ENCODE measurements at regions of chr7 and their contacts with region 1.

Region 1: GRCh38 chr7:73851410-73852234 is 9.3 kb upstream of the METTL27 start:
- DNase-seq: no peak
- ATAC-seq: peak; percentile 23 to 74 (median 67)
- H3K4me3 ChIP-seq: no peak overlapping the region
- H3K27ac ChIP-seq: peak overlapping the region in 2 of 4 donors; percentile 78
- H3K4me1 ChIP-seq: peaks cover 0 to 4% (median 3%) of the 10 kb centered on the region in 3 donors
- H3K27me3 ChIP-seq: no peaks in the 10 kb centered on the region
- CTCF ChIP-seq: no peak

Region 2: DNA sequence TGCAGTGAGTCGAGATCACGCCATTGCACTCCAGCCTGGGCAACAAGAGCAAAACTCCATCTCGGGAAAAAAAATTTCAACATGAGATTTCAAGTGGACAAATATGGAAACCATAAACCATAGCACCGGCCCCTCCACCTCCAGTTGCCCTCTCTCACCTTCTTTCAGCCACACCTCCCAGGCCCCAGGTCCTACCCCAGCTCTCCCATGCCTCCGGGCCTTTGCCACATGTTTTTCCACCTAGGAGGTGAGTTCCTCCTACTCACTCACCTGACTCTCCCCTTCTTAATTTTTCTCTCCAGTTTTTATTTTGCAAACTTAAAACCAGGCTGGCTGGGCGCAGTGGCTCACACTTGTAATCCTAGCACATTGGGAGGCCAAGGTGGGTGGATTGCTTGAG is 34.5 kb before region 1 on chr7:
- intact Hi-C with region 1: loop called in 1 of 3 experiments (anchors 5 kb)
- DNase-seq: peak in 3 of 6 donors; percentile 5 to 9 (median 9)
- ATAC-seq: no peak
- H3K4me3 ChIP-seq: no peak overlapping the region
- H3K27ac ChIP-seq: no peak overlapping the region
- H3K4me1 ChIP-seq: no peaks in the 10 kb centered on the region
- H3K27me3 ChIP-seq: no peaks in the 10 kb centered on the region
- CTCF ChIP-seq: no peak